ENCODE measurements at regions of chr19 and their contacts with region 1.

Region 1: GRCh38 chr19:49766007-49766937 is 529 bp upstream of the AP2A1 start:
- DNase-seq: peak; percentile 86 to 100 (median 99)
- ATAC-seq: peak; percentile 92
- H3K4me3 ChIP-seq: peak overlapping the region; percentile 79
- H3K4me3 Mint-ChIP-seq: peak overlapping the region; percentile 89 to 98 (median 96)
- H3K27ac ChIP-seq: peak overlapping the region; percentile 80
- H3K27ac Mint-ChIP-seq: peak overlapping the region; percentile 84 to 98 (median 96)
- H3K4me1 ChIP-seq: peaks cover 11 to 16% of the 10 kb centered on the region in 2 donors
- H3K4me1 Mint-ChIP-seq: peaks cover 15 to 43% (median 36%) of the 10 kb centered on the region in 7 donors
- H3K27me3 ChIP-seq: no peaks in the 10 kb centered on the region
- H3K27me3 Mint-ChIP-seq: no peaks in the 10 kb centered on the region

Region 2: DNA sequence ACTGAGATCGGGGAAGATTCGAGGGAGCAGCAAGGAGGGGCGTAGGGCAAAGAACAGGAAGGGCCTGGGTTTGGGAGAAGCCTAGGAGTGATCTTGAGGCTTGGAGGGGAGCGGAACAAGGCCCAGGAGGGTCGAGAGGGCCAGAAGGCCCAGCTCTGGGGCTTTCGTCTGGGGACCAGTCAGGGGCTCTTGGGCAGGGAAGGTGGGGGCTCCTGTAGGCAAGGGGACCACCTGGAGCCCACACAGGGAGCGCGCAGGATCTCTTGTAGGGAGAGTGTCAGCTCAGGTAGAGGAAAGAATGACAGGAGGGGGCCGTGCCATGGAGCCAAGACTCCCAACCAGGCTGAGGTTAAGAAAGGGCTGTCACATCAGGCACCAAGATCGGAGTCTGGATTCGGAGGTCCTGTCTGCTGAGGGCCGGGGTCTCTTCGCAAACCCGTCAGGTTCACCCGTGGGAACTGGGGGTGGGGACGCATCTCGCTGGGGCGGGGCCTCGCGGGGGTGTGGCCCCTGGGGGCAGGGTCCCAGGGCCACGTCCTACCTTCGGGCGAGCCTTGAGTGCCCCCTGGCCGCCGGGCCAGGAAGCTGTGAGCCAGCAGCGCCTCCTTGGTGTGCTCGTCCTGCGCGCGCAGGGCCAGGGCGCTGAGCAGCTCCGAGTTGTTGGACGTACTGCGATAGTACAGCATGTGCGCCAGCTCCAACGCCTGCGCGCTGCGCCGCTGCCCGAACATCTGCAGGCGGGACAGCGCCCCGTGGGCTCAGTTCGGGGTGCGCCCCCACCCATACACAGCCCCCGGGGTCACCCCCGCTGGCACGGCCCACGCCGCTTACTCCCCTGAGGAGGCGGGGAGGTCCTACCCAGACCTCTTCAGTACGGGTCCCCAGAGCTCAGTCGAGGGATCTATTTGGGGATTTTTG is 1432.5 kb before region 1 on chr19:
- CTCF ChIA-PET with region 1: no interaction called
- POLR2A ChIA-PET with region 1: interaction called, 3 read pairs
- intact Hi-C with region 1: loop called in 1 of 2 experiments (anchors 5 kb)
- DNase-seq: peak; percentile 90 to 96 (median 93)
- ATAC-seq: peak; percentile 77
- H3K4me3 ChIP-seq: peak overlapping the region; percentile 77
- H3K4me3 Mint-ChIP-seq: peak overlapping the region; percentile 83 to 100 (median 97)
- H3K27ac ChIP-seq: peak overlapping the region; percentile 95
- H3K27ac Mint-ChIP-seq: peak overlapping the region; percentile 93 to 100 (median 97)
- H3K4me1 ChIP-seq: peaks cover 32 to 43% of the 10 kb centered on the region in 2 donors
- H3K4me1 Mint-ChIP-seq: peaks cover 25 to 61% (median 47%) of the 10 kb centered on the region in 7 donors
- H3K27me3 ChIP-seq: no peaks in the 10 kb centered on the region
- H3K27me3 Mint-ChIP-seq: no peaks in the 10 kb centered on the region

Region 3: GRCh38 chr19:49497047-49497788 is 269.1 kb before region 1 on chr19:
- CTCF ChIA-PET with region 1: no interaction called
- POLR2A ChIA-PET with region 1: no interaction called
- intact Hi-C with region 1: loop called in 1 of 2 experiments (anchors 2 kb)
- DNase-seq: peak; percentile 55 to 85 (median 77)
- ATAC-seq: peak; percentile 20
- H3K4me3 ChIP-seq: peak overlapping the region; percentile 97
- H3K4me3 Mint-ChIP-seq: peak overlapping the region; percentile 96 to 100 (median 99)
- H3K27ac ChIP-seq: peak overlapping the region; percentile 99
- H3K27ac Mint-ChIP-seq: peak overlapping the region; percentile 91 to 100 (median 98)
- H3K4me1 ChIP-seq: peaks cover 21 to 40% of the 10 kb centered on the region in 2 donors
- H3K4me1 Mint-ChIP-seq: peaks cover 32 to 64% (median 50%) of the 10 kb centered on the region in 7 donors
- H3K27me3 ChIP-seq: no peaks in the 10 kb centered on the region
- H3K27me3 Mint-ChIP-seq: peaks cover 0 to 12% (median 0%) of the 10 kb centered on the region in 5 donors

Region 4: GRCh38 chr19:49690656-49691242 is 75.5 kb before region 1 on chr19 and contains the start of gene CPT1C:
- CTCF ChIA-PET with region 1: no interaction called
- POLR2A ChIA-PET with region 1: no interaction called
- intact Hi-C with region 1: loop called (anchors 2 to 5 kb)
- DNase-seq: peak in 7 of 9 donors; percentile 31 to 65 (median 46)
- ATAC-seq: peak; percentile 71
- H3K4me3 ChIP-seq: peak within 1 kb of the TSS; percentile 45
- H3K4me3 Mint-ChIP-seq: peak within 1 kb of the TSS; percentile 82 to 98 (median 86)
- H3K27ac ChIP-seq: peak within 1 kb of the TSS; percentile 44
- H3K27ac Mint-ChIP-seq: peak within 1 kb of the TSS; percentile 6 to 84 (median 45)
- H3K4me1 ChIP-seq: peaks cover 4 to 12% of the 10 kb centered on the region in 2 donors
- H3K4me1 Mint-ChIP-seq: peaks cover 19 to 38% (median 25%) of the 10 kb centered on the region in 7 donors
- H3K27me3 ChIP-seq: no peaks in the 10 kb centered on the region
- H3K27me3 Mint-ChIP-seq: peaks cover 5 to 15% (median 9%) of the 10 kb centered on the region in 5 donors
- total RNA-seq, gene CPT1C: 0.96 to 6.0 (median 1.5) TPM

Region 5: GRCh38 chr19:49817964-49818648 is 51.8 kb after region 1 on chr19 and contains the start of gene MED25:
- CTCF ChIA-PET with region 1: no interaction called
- POLR2A ChIA-PET with region 1: interaction called, 10 read pairs
- intact Hi-C with region 1: loop called (anchors 1 kb)
- DNase-seq: peak; percentile 87 to 96 (median 94)
- ATAC-seq: peak; percentile 65
- H3K4me3 ChIP-seq: peak within 1 kb of the TSS; percentile 91
- H3K4me3 Mint-ChIP-seq: peak within 1 kb of the TSS; percentile 94 to 100 (median 98)
- H3K27ac ChIP-seq: peak within 1 kb of the TSS; percentile 88
- H3K27ac Mint-ChIP-seq: peak within 1 kb of the TSS; percentile 96 to 100 (median 100)
- H3K4me1 ChIP-seq: peaks cover 11 to 17% of the 10 kb centered on the region in 2 donors
- H3K4me1 Mint-ChIP-seq: peaks cover 20 to 51% (median 39%) of the 10 kb centered on the region in 7 donors
- H3K27me3 ChIP-seq: no peaks in the 10 kb centered on the region
- H3K27me3 Mint-ChIP-seq: no peaks in the 10 kb centered on the region
- total RNA-seq, gene MED25: 36.8 to 75.2 (median 55.4) TPM

Region 6: GRCh38 chr19:49929611-49930482 is 163.6 kb after region 1 on chr19:
- CTCF ChIA-PET with region 1: no interaction called
- POLR2A ChIA-PET with region 1: no interaction called
- intact Hi-C with region 1: loop called (anchors 1 kb)
- DNase-seq: peak in 8 of 9 donors; percentile 88 to 97 (median 96)
- ATAC-seq: peak; percentile 92
- H3K4me3 ChIP-seq: peak overlapping the region; percentile 100
- H3K4me3 Mint-ChIP-seq: peak overlapping the region; percentile 95 to 100 (median 97)
- H3K27ac ChIP-seq: peak overlapping the region; percentile 99
- H3K27ac Mint-ChIP-seq: peak overlapping the region; percentile 96 to 99 (median 97)
- H3K4me1 ChIP-seq: peaks cover 34 to 35% of the 10 kb centered on the region in 2 donors
- H3K4me1 Mint-ChIP-seq: peaks cover 46 to 76% (median 68%) of the 10 kb centered on the region in 7 donors
- H3K27me3 ChIP-seq: no peaks in the 10 kb centered on the region
- H3K27me3 Mint-ChIP-seq: peaks cover 0 to 3% (median 0%) of the 10 kb centered on the region in 5 donors

Region 7: DNA sequence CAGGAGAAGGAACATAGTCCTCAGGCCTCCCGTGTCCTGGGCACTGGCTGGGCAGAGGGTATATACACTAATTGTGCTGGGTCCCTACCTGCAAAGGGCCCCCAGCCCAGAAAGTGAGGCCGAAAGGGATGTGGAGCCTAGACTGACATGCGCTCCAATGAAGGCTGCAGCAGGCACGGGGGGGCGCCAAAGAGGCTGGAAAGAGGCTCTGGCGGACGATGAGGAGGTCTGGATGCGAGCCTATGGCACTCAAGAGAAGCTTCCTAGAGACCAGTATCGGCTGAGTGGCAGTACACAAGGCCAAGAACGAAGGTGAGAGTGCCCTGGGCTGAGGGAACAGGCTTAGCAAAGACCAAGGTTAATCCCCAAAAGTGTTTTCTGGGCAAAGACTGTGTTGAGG is 242.3 kb after region 1 on chr19:
- CTCF ChIA-PET with region 1: no interaction called
- POLR2A ChIA-PET with region 1: no interaction called
- intact Hi-C with region 1: no loop called
- DNase-seq: no peak
- ATAC-seq: no peak
- H3K4me3 ChIP-seq: no peak overlapping the region
- H3K4me3 Mint-ChIP-seq: no peak overlapping the region
- H3K27ac ChIP-seq: no peak overlapping the region
- H3K27ac Mint-ChIP-seq: peak overlapping the region in 1 of 9 donors; percentile 36
- H3K4me1 ChIP-seq: no peaks in the 10 kb centered on the region
- H3K4me1 Mint-ChIP-seq: peaks cover 0 to 20% (median 6%) of the 10 kb centered on the region in 7 donors
- H3K27me3 ChIP-seq: no peaks in the 10 kb centered on the region
- H3K27me3 Mint-ChIP-seq: no peaks in the 10 kb centered on the region